Common myeloid progenitor, CD34-positive (primary cell): ENCODE measurements at regions of chr1 and their contacts with region 1.

Region 1: DNA sequence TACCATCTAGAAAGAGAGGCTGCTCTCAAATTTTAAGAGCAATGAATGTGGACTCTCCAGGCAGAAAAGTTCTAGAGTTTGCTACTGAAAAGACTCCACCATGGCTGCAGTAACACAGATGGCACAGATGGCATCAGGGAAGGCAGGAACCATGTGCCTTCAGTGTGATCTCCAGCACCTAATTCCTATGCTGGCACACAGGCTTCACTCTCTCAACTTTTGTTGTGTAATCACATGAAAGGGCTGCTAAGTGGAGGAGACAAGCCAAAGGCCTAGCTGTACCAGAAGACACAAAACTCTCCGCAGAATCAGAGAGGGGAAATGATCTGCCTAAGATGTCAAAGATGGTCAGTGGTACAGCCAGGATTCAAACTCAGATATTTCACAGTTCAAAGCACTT is 31.1 kb downstream of the ERI3 start:
- DNase-seq: no peak
- H3K4me3 ChIP-seq: no peak overlapping the region
- H3K27ac ChIP-seq: no peak overlapping the region
- H3K4me1 ChIP-seq: no peaks in the 10 kb centered on the region
- H3K27me3 ChIP-seq: no peaks in the 10 kb centered on the region

Region 2: DNA sequence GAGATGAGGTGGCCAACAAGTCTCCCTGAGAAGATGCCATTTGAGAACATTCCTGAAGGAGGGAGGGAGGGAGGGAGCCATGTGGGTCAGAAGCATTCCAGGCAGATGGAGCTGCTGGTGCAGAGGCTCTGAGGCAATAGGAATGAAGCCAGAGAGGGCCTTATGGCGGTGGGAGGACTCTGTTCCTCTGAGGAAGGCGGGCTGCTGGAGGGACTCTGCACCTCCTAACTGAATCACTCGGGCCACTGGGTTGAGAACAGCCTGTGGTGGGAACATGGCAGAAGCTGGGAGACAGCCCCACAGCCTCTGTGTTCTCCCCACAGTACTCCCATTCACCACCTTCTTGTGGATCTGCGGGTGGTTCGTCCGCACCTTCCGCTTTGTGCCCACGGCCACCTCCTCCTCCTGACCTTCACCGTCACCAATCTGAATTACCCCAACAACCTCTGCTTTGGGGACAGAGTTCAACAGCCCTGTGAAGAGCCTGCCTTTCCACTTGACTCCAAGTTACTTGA is 1056.6 kb before region 1 on chr1:
- CTCF ChIA-PET with region 1: no interaction called
- POLR2A ChIA-PET with region 1: interaction called, 10 read pairs
- DNase-seq: no peak
- H3K4me3 ChIP-seq: no peak overlapping the region
- H3K27ac ChIP-seq: no peak overlapping the region
- H3K4me1 ChIP-seq: peaks cover 0 to 21% (median 6%) of the 10 kb centered on the region in 4 experiments
- H3K27me3 ChIP-seq: no peaks in the 10 kb centered on the region

Region 3: GRCh38 chr1:44283524-44284173 is 40.3 kb before region 1 on chr1:
- CTCF ChIA-PET with region 1: no interaction called
- POLR2A ChIA-PET with region 1: no interaction called
- DNase-seq: no peak
- H3K4me3 ChIP-seq: no peak overlapping the region
- H3K27ac ChIP-seq: no peak overlapping the region
- H3K4me1 ChIP-seq: peaks cover 0 to 3% (median 0%) of the 10 kb centered on the region in 4 experiments
- H3K27me3 ChIP-seq: no peaks in the 10 kb centered on the region

Region 4: GRCh38 chr1:44312399-44313196 is 11.3 kb before region 1 on chr1:
- CTCF ChIA-PET with region 1: interaction called, 15 read pairs
- POLR2A ChIA-PET with region 1: no interaction called
- DNase-seq: no peak
- H3K4me3 ChIP-seq: no peak overlapping the region
- H3K27ac ChIP-seq: no peak overlapping the region
- H3K4me1 ChIP-seq: peaks cover 0 to 10% (median 6%) of the 10 kb centered on the region in 4 experiments
- H3K27me3 ChIP-seq: no peaks in the 10 kb centered on the region

Region 5: DNA sequence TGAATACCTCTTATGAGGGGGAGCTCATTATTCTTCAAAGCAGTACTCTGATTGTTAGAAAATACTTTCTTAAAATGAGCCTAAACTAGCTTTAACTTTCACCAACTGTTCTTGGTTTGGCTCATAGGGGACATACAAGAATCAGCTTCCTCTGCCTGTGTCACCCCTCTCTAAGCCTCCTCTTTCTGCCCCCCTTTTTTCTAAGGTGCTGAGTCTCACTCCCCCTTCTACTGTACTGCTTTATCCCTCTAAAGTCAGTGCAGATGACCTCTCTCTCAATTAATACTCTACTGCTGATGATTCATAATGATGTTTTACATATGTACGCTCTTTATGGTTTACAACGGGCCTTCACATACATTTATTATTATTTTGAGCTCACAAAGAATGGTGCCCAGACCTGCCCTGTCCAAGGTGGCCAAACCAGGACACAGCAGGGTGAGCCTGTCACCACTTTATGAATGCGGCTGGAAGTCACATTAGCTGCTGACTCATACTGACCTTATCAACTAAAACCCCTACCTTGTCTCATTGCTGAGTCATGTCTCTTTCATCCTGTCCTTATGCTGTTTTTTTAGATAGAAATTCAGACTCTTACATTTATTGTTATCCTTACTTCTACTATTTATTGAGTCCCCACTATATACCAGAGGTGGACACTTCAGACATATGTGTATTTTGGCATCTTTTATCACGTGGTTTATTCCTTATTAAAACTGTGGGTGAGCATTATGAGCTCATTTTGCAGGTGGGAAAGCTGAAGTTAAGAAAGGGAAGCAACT is 208.0 kb after region 1 on chr1:
- CTCF ChIA-PET with region 1: no interaction called
- POLR2A ChIA-PET with region 1: no interaction called
- DNase-seq: peak; percentile 66 to 86 (median 78)
- H3K4me3 ChIP-seq: no peak overlapping the region
- H3K27ac ChIP-seq: peak overlapping the region in 1 of 2 experiments; percentile 43
- H3K4me1 ChIP-seq: peaks cover 9 to 22% (median 16%) of the 10 kb centered on the region in 4 experiments
- H3K27me3 ChIP-seq: no peaks in the 10 kb centered on the region